Heart left ventricle (tissue), 16 donors: ENCODE measurements at regions of chr1 and their contacts with region 1.

Region 1: GRCh38 chr1:57340334-57341070 is 83.4 kb downstream of the DAB1 start:
- DNase-seq: no peak
- ATAC-seq: peak in 3 of 4 donors; percentile 60 to 65 (median 61)
- H3K4me3 ChIP-seq: no peak overlapping the region
- H3K27ac ChIP-seq: no peak overlapping the region
- H3K4me1 ChIP-seq: peaks cover 0 to 3% (median 0%) of the 10 kb centered on the region in 12 donors
- H3K27me3 ChIP-seq: no peaks in the 10 kb centered on the region
- CTCF ChIP-seq: peak in 7 of 12 donors; percentile 4 to 32 (median 21)
- POLR2A ChIP-seq: no peak

Region 2: DNA sequence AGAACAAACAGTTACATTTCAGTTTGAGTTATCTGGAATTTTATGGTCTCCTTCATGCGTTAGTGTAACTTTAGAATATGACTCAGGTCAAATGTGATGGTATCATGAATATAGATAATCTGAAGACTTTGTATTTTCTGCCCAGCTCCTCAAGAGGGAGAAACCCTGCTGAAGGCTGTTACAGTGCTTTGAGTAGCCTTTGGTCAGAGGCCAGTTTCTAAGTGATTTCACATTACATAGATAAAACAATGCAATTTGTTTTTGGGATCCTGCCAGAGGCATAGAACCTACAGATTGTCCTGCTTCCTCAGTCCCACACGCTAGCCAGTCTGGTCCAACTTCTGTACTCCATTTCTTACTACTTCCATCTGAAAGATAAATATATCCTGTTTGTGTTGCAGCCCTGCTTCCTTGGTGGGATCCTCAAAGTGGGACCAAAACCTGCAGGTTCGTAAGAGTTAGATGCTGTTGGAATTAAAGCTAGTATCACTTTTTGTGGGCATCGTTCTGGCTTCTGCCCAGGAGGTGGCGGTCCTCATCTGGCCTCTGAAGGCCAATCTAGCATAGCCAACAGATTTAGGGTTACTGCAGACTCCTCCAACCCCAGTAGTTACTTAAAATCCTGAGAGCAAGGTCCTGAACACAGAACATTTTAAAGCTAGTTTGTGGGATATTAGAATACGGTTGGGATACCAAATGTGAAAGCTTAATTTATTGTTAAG is 1479.5 kb before region 1 on chr1:
- intact Hi-C with region 1: no loop called
- DNase-seq: no peak
- ATAC-seq: no peak
- H3K4me3 ChIP-seq: no peak overlapping the region
- H3K27ac ChIP-seq: no peak overlapping the region
- H3K4me1 ChIP-seq: peaks cover 0 to 14% (median 7%) of the 10 kb centered on the region in 12 donors
- H3K27me3 ChIP-seq: no peaks in the 10 kb centered on the region
- CTCF ChIP-seq: no peak
- POLR2A ChIP-seq: no peak

Region 3: GRCh38 chr1:56837244-56837939 is 503.1 kb before region 1 on chr1:
- intact Hi-C with region 1: loop called in 8 of 10 experiments (anchors 5 to 10 kb)
- DNase-seq: no peak
- ATAC-seq: no peak
- H3K4me3 ChIP-seq: no peak overlapping the region
- H3K27ac ChIP-seq: no peak overlapping the region
- H3K4me1 ChIP-seq: peaks cover 0 to 1% (median 0%) of the 10 kb centered on the region in 12 donors
- H3K27me3 ChIP-seq: no peaks in the 10 kb centered on the region
- CTCF ChIP-seq: no peak
- POLR2A ChIP-seq: no peak